Activated CD4-positive, alpha-beta memory T cell treated with anti-CD3 and anti-CD28 coated beads, Interleukin-2, amount 10 ng/mL, durations not matched to agents 7 days and 5 days (primary cell): ENCODE measurements at regions of chr1 and their contacts with region 1.

Region 1: DNA sequence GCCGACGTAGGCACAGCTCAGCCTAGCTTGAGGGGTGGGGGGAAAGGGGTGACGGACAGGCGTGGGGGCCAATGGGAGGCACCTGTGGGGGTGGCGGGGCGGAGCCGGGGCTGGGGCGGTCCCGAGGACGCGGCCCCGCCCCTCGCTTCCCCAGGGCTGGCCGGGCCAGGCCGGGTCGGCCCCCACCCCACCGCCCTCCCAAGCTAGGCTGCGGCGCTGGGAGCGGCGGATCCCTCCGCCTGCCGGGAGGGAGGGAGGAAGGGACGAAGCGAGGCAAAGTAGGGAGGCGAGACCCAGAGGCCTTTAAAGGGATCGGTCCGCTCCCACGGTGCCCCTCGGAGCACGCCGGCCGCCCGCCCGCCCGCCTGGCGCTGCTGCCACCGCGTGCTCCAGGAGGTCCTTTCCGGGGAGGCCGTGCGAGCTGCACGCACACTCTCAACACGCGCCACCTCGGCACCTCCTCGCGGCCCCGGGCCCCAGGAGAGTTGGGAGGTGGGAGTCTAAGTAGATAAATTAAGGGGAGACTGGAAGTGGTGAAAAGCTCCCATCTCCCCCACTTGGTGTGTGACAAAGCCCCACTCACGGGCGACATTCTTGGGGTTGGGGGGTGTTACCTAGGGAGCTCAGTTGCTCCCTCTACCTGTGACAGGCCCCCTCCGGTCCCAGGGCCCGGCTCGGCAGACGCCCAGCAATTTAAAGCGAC is 373 bp upstream of the MEF2D start:
- DNase-seq: peak; percentile 93
- H3K4me3 Mint-ChIP-seq: peak overlapping the region; percentile 87
- H3K27ac Mint-ChIP-seq: peak overlapping the region; percentile 97
- H3K4me1 Mint-ChIP-seq: peaks cover 74% of the 10 kb centered on the region
- H3K27me3 Mint-ChIP-seq: no peaks in the 10 kb centered on the region

Region 2: DNA sequence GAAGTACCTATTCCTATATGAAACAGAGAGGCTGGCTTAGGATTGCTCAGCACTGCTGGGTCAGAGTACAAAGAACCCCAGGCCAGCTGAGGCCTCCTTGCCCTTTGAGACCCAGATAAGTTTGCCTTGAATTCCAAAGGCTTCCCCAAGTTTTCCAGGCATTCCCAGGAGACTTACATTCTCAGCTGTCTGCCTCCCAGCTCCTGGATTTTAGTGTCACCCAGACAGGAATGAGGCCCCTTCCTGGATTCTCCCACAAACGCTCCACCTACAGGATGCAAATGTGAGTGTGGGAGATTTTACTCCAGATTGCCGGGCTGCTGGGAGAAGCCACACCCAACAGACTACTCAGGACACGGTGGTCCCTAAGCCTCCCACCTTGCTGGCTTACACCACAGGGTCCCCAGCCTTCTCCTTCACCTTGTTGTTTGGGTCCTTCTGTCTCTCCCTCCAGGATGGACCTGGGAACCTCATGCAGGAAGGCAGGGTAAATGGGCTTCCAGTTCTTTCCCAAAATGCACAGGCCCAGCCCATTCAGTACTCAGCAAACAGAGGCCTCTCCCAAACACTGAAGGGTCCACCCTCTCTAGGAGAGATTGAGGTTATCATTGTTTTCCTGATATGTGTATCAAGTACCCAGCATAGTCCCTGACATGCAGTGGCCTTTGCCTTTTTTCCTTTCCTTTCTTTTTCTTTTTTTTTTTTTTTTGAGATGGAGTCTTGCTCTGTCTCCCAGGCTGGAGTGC is 121.4 kb before region 1 on chr1:
- CTCF ChIA-PET with region 1: no interaction called
- POLR2A ChIA-PET with region 1: no interaction called
- DNase-seq: no peak
- H3K4me3 Mint-ChIP-seq: no peak overlapping the region
- H3K27ac Mint-ChIP-seq: no peak overlapping the region
- H3K4me1 Mint-ChIP-seq: no peaks in the 10 kb centered on the region
- H3K27me3 Mint-ChIP-seq: peaks cover 7% of the 10 kb centered on the region

Region 3: DNA sequence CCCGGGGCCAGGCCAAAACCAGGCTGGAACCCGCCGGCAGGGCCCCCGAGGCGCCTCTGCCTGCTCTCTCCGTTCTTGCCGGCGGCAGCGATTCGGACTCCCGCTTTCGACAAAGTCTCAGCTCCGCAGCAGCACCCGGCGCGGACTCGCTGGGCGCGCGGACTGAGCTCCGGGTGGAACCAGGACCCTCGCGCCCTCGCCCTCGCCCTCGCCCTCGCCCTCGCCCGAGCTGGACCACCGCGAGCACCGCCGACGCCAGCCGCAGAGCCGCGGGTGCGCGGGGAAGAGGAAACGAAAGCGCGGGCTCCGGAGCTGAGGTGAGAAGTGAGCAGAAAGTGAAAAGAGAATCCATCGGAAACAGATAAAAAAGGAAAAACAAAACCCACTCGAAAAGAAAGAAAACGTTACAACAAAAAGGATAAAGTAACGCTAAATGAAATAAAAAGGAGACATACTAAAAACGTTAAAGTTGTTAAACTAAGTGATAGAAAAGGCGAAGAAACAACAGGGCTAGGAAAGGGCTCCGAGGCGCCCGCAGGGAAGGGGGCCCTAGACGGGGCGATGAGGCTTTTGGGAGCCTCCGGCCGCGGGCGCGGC is 65.3 kb before region 1 on chr1:
- CTCF ChIA-PET with region 1: no interaction called
- POLR2A ChIA-PET with region 1: no interaction called
- DNase-seq: peak; percentile 39
- H3K4me3 Mint-ChIP-seq: peak overlapping the region; percentile 65
- H3K27ac Mint-ChIP-seq: no peak overlapping the region
- H3K4me1 Mint-ChIP-seq: peaks cover 27% of the 10 kb centered on the region
- H3K27me3 Mint-ChIP-seq: peaks cover 88% of the 10 kb centered on the region

Region 4: GRCh38 chr1:156456622-156457465 is 44.1 kb before region 1 on chr1:
- CTCF ChIA-PET with region 1: interaction called, 9 read pairs
- POLR2A ChIA-PET with region 1: interaction called, 16 read pairs
- DNase-seq: peak; percentile 94
- H3K4me3 Mint-ChIP-seq: peak overlapping the region; percentile 83
- H3K27ac Mint-ChIP-seq: peak overlapping the region; percentile 97
- H3K4me1 Mint-ChIP-seq: peaks cover 30% of the 10 kb centered on the region
- H3K27me3 Mint-ChIP-seq: peaks cover 6% of the 10 kb centered on the region

Region 5: DNA sequence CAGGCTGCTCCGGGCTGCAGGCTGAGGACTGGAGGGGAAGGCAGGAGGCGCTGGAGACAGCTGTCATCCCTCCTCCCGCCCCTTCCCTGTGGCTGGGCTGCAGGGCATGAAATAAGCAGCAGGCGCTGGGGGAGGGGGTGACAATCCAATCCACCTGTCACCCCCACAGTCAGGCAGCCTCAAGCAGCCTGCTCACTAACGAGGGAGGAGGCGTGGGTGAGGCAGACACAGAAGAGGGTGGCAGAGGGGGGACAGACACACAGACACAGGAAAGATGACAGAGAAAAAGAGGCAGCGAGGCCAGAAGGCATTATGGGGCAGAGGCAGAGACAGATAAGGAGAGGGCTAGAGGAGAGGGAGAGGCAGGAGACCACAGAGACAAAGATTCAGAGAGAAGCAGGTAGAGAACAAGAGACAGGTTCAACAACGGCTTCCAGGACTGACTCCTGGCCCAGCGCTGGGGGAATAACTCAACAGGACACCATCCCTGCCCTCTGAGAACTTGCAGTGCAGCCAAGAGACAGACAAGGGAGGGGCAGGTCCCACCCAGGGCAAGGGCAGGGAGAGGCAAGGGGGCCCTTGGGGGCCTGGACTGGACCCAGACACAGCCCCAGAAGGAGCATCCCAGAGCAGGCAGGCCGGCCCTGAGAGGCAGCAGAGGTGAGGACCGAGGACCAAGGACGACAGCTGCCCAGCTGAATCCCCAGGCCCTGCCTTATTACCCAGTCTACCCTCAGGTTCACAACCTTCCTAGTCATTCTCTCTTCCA is 11.6 kb before region 1 on chr1:
- CTCF ChIA-PET with region 1: interaction called, 18 read pairs
- POLR2A ChIA-PET with region 1: interaction called, 286 read pairs
- DNase-seq: peak; percentile 43
- H3K4me3 Mint-ChIP-seq: peak overlapping the region; percentile 49
- H3K27ac Mint-ChIP-seq: peak overlapping the region; percentile 65
- H3K4me1 Mint-ChIP-seq: peaks cover 75% of the 10 kb centered on the region
- H3K27me3 Mint-ChIP-seq: no peaks in the 10 kb centered on the region

Region 6: GRCh38 chr1:156571949-156572662 is 71.2 kb after region 1 on chr1 and contains the start of gene IQGAP3:
- CTCF ChIA-PET with region 1: interaction called, 3 read pairs
- POLR2A ChIA-PET with region 1: interaction called, 13 read pairs
- DNase-seq: peak; percentile 84
- H3K4me3 Mint-ChIP-seq: peak within 1 kb of the TSS; percentile 98
- H3K27ac Mint-ChIP-seq: peak within 1 kb of the TSS; percentile 51
- H3K4me1 Mint-ChIP-seq: peaks cover 26% of the 10 kb centered on the region
- H3K27me3 Mint-ChIP-seq: peaks cover 25% of the 10 kb centered on the region
- total RNA-seq, gene IQGAP3: 18.4 to 19.7 TPM

Region 7: DNA sequence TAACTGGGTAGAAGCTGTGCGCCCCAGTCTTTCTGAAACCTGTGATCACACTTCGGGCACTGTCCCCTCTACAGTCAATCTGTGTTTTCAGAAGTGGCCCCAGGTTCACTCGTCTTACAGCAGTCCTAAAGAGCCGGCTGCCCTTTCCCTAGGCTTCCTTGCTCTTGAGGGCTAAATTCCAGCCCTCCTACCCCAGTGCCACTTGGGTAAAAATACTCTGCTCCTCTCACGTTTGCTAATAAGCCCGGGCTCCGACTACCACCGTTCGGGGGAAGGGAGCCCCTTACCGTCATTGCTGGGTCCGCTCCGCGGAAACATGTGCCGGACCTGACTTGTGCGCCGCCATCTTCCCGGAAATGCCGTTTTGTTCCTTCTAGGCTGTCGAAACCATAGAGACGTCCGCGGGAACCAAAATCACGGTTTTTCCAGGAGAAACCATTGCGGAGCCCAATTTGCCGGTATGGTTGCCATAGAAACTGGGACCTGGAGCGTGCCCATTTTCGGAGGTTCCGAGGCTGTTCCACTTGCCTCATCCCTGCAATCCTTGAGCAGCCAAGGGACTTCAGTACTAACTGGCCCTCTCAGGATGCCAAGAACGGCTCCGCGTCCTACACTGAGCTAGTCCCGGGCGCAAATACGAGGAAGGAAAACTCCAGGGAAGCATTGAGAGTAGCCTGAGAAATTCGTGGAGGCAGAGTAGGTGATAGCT is 100.3 kb after region 1 on chr1 and contains the start of gene GPATCH4:
- CTCF ChIA-PET with region 1: interaction called, 6 read pairs
- POLR2A ChIA-PET with region 1: interaction called, 10 read pairs
- DNase-seq: peak; percentile 88
- H3K4me3 Mint-ChIP-seq: peak within 1 kb of the TSS; percentile 98
- H3K27ac Mint-ChIP-seq: peak within 1 kb of the TSS; percentile 88
- H3K4me1 Mint-ChIP-seq: peaks cover 35% of the 10 kb centered on the region
- H3K27me3 Mint-ChIP-seq: no peaks in the 10 kb centered on the region
- total RNA-seq, gene GPATCH4: 19.0 to 20.6 TPM